Calu3 (cell line): ENCODE measurements at regions of chr1 and their contacts with region 1.

Region 1: DNA sequence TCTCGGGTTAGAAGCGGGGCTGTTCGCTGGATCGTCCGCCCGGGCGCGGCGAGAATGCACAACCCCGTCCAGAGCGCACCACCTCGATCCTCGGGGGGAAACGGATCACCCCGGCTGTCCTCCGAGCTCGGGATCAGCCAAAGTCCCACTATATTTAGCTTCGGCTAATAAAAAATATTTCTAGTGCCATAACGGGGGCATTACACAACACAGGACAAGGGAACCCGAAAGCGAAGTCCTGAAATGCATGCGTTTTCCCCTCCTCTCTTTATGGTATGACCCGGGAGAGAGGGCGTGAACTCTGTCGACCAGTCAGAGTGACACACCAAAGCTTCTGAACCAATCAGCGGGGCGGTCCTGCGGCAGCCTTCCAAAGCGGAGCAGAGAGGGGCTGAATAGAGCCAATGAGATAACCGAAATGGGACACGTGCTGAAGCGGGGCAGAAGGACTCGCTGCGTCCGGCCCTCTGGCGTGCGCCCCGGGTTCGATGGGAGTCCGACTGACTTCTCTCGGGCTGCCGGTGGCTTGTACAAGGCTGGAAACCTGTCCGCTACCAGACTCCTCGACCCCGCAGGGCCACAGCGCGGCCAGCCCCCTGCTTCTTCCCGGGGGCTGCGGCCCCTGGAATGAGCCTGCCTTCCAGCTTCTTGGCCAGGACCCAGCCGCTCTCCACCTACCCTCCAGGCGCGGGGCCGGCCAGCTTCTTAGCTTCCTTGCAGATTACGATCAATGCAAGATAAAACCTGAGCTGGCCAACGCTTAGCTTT is at the start of gene ALDH4A1:
- DNase-seq: peak; percentile 91
- H3K4me3 Mint-ChIP-seq: peak within 1 kb of the TSS; percentile 96
- H3K27ac Mint-ChIP-seq: peak within 1 kb of the TSS; percentile 89
- H3K4me1 Mint-ChIP-seq: peaks cover 14% of the 10 kb centered on the region
- H3K27me3 Mint-ChIP-seq: no peaks in the 10 kb centered on the region
- CTCF ChIP-seq: no peak
- total RNA-seq, gene ALDH4A1: 10.1 and 10.7 TPM in 2 replicates

Region 2: DNA sequence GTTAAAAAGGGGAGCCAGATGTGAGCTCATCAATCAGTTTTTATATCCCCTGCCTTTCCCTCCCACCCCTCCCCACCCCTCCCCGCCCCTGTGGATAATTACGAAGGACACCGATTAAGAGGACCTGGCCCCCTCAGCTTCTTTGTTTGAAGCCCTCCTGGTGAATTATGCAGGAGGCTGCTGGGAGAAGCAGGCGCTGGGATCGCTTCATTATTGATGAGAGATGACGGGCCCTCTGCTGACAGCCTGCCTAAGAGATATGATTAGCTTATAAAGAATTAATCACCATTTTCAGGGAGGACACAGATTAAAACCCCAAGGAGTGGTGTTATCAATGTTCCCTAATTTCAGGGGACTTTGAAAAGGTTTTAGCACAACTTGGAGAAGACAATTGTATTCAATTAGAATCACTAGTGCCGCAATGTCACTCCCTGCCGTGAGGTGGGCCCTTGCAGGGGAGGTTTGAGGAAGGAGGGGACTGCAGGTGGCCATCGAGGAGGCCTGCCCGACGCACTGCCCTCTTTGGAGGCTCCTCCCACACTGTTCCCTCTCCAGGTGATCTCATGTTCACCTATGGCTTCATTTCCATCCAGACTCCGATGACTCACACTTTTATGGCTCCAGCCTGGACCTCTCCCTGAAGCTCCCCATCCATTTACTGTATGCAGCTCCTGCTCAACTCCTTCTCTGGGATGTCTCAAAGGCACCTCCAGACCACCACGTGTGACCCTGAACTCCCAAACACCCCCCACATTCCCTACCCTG is 489.0 kb before region 1 on chr1:
- CTCF ChIA-PET with region 1: no interaction called
- intact Hi-C with region 1: no loop called
- DNase-seq: no peak
- H3K4me3 Mint-ChIP-seq: no peak overlapping the region
- H3K27ac Mint-ChIP-seq: no peak overlapping the region
- H3K4me1 Mint-ChIP-seq: peaks cover 14% of the 10 kb centered on the region
- H3K27me3 Mint-ChIP-seq: peaks cover 29% of the 10 kb centered on the region
- CTCF ChIP-seq: no peak

Region 3: DNA sequence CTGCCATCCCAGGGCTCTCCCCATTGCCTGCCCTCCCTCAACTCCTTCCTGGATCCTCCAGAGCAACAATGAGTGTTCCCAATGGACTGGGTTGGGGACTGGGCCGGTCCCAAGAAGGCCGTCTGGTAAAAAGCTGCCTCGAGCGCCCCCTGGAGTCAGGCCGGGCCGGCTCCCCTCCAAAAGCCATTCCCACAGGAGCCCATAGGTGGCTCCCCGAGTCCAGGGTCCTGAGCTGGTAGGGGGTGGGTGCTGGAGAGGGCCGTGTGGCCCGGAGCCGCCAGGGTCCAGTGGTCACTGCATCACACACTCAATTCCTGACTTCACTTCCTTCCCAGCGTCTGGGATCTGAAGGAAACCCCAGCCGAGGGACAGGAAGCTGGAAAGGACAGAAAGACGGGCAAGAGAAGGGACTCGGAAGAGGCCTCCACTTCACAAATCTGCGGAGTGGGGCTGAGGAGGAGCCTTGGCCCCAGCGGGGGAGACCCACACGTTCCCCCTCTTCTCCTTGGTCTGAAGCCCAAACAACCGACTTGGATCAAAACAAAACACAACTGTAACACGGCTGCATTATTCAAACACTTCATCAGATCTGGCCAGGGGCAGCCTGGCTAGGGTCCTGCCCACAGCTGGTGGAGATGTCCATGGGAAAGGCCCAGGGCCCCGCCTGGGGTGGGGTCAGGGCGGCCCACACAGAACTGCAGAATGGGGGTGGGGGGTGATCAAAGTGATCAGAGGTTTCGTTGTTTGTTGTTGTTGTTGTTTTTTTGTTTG is 10.5 kb after region 1 on chr1:
- CTCF ChIA-PET with region 1: interaction called, 11 read pairs
- intact Hi-C with region 1: no loop called
- DNase-seq: peak; percentile 82
- H3K4me3 Mint-ChIP-seq: no peak overlapping the region
- H3K27ac Mint-ChIP-seq: no peak overlapping the region
- H3K4me1 Mint-ChIP-seq: no peaks in the 10 kb centered on the region
- H3K27me3 Mint-ChIP-seq: no peaks in the 10 kb centered on the region
- CTCF ChIP-seq: peak; percentile 91

Region 4: GRCh38 chr1:18956369-18957135 is 53.8 kb after region 1 on chr1 and contains the start of gene IFFO2:
- CTCF ChIA-PET with region 1: no interaction called
- intact Hi-C with region 1: loop called (anchors 10 kb)
- DNase-seq: peak; percentile 98
- H3K4me3 Mint-ChIP-seq: peak within 1 kb of the TSS; percentile 77
- H3K27ac Mint-ChIP-seq: peak within 1 kb of the TSS; percentile 79
- H3K4me1 Mint-ChIP-seq: peaks cover 31% of the 10 kb centered on the region
- H3K27me3 Mint-ChIP-seq: peaks cover 12% of the 10 kb centered on the region
- CTCF ChIP-seq: no peak
- total RNA-seq, gene IFFO2: 6.6 and 13.0 TPM in 2 replicates

Region 5: GRCh38 chr1:19081218-19081893 is 178.6 kb after region 1 on chr1:
- CTCF ChIA-PET with region 1: no interaction called
- intact Hi-C with region 1: loop called (anchors 5 kb)
- DNase-seq: no peak
- H3K4me3 Mint-ChIP-seq: peak overlapping the region; percentile 26
- H3K27ac Mint-ChIP-seq: peak overlapping the region; percentile 64
- H3K4me1 Mint-ChIP-seq: peaks cover 52% of the 10 kb centered on the region
- H3K27me3 Mint-ChIP-seq: no peaks in the 10 kb centered on the region
- CTCF ChIP-seq: no peak

Region 6: DNA sequence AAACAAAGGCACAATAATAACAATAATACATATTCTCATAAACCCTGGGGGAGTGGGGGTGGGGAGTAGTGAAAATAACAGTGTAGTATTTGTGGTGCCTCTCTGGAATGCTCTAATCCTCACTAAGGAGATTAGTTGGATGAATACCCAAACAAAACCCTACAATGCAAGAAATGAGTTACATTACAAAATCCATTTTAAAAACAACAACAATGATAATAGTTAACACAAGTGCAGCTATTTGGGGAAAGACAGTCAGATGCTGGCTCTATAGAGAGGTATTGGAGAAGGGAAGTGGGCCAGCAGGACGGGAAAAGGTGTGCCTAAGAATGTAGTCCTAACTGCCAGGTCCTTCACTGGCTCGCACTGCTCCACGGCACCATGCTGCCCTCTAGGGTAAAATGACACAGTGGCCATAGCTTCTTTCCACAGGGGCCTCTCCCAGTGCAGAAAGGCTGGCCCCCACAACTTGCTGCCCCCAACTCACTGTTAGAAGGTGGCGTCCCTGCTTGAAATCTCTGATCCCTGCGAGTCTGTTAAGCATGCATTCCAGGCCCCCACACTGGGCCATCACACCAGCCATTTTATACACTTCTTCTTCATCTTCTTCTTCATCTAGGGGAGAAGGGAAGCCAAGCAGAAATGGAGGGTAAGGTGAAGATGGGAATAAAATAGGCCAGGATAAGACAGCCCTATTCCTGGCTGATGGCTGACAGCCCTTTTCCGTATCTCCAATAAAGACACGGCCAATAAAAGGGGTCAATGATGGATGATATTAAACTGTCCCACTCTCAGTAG is 193.5 kb after region 1 on chr1:
- CTCF ChIA-PET with region 1: interaction called, 22 read pairs
- intact Hi-C with region 1: loop called (anchors 5 kb)
- DNase-seq: peak; percentile 65
- H3K4me3 Mint-ChIP-seq: no peak overlapping the region
- H3K27ac Mint-ChIP-seq: no peak overlapping the region
- H3K4me1 Mint-ChIP-seq: no peaks in the 10 kb centered on the region
- H3K27me3 Mint-ChIP-seq: no peaks in the 10 kb centered on the region
- CTCF ChIP-seq: peak; percentile 54

Region 7: DNA sequence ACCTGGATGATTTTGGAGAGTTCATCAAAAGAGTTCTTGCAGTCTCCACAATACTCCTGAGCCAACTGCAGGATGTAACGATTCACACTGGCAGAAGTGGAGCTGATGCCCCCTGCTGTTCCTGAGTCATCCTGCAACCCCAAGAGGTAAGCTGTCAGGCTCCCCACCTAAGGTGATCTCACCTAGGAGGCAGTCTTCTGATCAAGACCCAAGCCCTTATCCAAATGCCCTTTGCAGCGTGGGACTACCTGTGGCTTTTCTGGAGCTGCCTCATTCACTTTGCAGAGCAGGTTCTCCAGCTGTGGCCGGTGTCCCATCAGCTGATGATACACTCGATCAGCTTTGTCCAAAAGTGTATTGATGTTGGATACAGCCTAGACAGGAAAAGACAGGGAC is 211.0 kb after region 1 on chr1:
- CTCF ChIA-PET with region 1: interaction called, 5 read pairs
- intact Hi-C with region 1: loop called (anchors 5 kb)
- DNase-seq: peak; percentile 42
- H3K4me3 Mint-ChIP-seq: no peak overlapping the region
- H3K27ac Mint-ChIP-seq: no peak overlapping the region
- H3K4me1 Mint-ChIP-seq: no peaks in the 10 kb centered on the region
- H3K27me3 Mint-ChIP-seq: no peaks in the 10 kb centered on the region
- CTCF ChIP-seq: peak; percentile 27